Breast epithelium (tissue), 4 donors: ENCODE measurements at regions of chr9 and their contacts with region 1.

Region 1: DNA sequence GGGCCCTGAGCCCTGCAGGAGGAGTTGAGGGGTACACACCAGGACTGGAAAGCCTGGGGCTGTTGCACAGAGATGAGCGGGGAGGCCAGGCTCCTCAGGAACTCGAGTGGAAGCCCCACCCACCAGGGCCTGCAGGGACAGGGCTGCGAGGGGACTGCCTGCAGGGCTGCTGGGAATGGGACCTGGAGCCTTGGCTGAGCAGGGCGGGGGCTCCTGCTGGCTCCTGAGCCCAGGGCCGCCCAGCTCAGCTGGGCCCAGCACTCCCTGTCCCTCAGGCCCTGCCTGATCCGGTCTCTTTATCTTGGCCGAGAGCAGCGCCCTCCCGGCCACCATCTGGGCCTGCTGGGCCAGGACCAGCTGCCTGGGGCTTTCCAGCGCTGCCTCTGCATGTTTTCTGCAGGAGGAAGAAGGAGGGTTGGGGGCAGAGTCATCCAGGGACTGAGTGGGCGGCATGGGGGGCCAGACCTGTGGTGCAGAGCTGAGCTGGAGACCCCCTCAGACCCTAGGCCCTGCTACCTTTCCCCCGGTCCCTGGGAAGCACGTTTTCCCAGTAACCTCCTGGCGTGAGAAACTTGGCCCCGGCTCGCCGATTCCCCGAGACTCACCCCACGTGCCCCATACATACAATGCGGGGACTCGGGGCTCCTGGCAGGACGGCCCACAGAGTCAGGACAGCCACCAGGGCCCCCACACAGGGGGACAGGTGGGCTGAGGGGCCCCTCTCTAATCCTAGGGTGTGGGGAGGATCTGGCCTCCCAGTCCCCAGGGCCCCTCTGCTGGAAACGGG is 9.4 kb downstream of the LCN12 start:
- DNase-seq: no peak
- H3K4me3 ChIP-seq: no peak overlapping the region
- H3K27ac ChIP-seq: peak overlapping the region in 1 of 2 donors; percentile 43
- H3K4me1 ChIP-seq: no peaks in the 10 kb centered on the region
- H3K27me3 ChIP-seq: no peaks in the 10 kb centered on the region
- CTCF ChIP-seq: no peak
- POLR2A ChIP-seq: no peak

Region 2: GRCh38 chr9:136740971-136741882 is 220.2 kb before region 1 on chr9:
- intact Hi-C with region 1: no loop called
- DNase-seq: no peak
- H3K4me3 ChIP-seq: peak overlapping the region; percentile 4 to 41 (median 11)
- H3K27ac ChIP-seq: no peak overlapping the region
- H3K4me1 ChIP-seq: peaks cover 8 to 11% of the 10 kb centered on the region in 2 donors
- H3K27me3 ChIP-seq: peaks cover 2 to 61% of the 10 kb centered on the region in 2 donors
- CTCF ChIP-seq: no peak
- POLR2A ChIP-seq: no peak

Region 3: GRCh38 chr9:137002251-137003041 is 41.0 kb after region 1 on chr9:
- intact Hi-C with region 1: loop called (anchors 1 kb)
- DNase-seq: no peak
- H3K4me3 ChIP-seq: no peak overlapping the region
- H3K27ac ChIP-seq: no peak overlapping the region
- H3K4me1 ChIP-seq: no peaks in the 10 kb centered on the region
- H3K27me3 ChIP-seq: no peaks in the 10 kb centered on the region
- CTCF ChIP-seq: no peak
- POLR2A ChIP-seq: no peak

Region 4: GRCh38 chr9:137339045-137339907 is 377.8 kb after region 1 on chr9:
- intact Hi-C with region 1: no loop called
- DNase-seq: no peak
- H3K4me3 ChIP-seq: no peak overlapping the region
- H3K27ac ChIP-seq: no peak overlapping the region
- H3K4me1 ChIP-seq: no peaks in the 10 kb centered on the region
- H3K27me3 ChIP-seq: no peaks in the 10 kb centered on the region
- CTCF ChIP-seq: no peak
- POLR2A ChIP-seq: no peak